GM10248 (cell line): ENCODE measurements at regions of chr2 and their contacts with region 1.

Region 1: DNA sequence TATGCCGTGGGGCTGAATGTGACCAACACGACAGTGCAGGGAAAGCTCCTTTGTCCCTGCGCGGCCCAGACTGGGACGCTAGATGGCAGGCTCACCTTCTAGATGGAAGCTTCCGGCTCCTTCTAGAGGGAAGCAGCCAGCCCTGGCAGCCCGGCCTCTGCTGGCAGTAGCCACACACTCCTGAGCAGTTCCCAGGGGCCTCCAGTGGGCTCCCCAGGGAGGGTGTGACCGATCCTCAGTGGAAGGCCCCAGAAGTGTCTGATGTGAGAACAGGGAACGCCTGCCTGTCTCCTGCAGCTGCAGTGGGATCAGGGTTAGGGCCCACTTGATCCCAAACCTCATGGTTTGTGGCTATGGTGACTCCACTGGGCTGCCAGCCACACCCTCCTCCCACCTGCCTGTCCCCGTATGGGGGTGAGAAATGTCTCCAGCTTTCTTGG is 48.5 kb upstream of the LRPPRC start:
- DNase-seq: peak; percentile 87
- CTCF ChIP-seq: peak; percentile 97

Region 2: GRCh38 chr2:44033947-44034346 is 10.4 kb before region 1 on chr2:
- CTCF ChIA-PET with region 1: interaction called, 27 read pairs
- POLR2A ChIA-PET with region 1: no interaction called
- DNase-seq: no peak
- CTCF ChIP-seq: no peak

Region 3: DNA sequence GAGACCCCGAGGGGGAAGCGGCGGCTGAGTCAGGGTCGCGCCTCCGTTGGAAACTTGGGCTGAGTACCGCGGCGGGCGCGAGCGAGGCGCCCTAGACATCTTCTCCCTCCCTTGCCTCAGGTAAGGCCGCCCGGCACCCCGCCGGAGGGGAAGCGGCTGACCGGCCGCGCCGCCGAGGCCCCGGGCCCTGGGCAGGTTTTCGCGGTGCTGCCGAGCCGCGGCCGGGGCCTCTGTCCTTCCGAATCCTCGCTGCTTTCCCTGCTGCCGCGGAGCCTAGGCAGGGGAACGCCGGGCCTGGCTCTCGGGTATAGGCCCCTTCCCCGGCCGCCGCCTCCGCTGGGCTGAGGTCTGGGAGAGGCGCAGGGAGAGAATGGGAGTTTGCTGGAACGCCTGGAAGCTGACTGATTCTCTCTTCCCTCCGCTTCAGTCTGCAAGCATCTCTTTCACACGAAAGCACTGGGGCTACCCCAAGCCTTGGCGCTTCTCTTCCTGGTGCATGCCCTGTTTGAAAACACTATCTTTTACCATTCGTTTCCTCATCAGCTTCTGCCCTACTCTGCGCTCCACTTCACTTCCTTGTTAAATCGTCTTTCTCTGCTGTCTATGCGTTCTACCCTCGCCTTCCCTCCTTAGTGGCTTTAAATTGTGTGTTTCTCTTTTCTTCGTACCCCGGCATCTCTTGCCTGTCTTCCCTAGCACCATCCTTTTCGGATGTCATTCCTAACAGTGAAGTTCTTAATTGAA is 125.0 kb after region 1 on chr2:
- CTCF ChIA-PET with region 1: no interaction called
- POLR2A ChIA-PET with region 1: no interaction called
- DNase-seq: peak; percentile 34
- CTCF ChIP-seq: no peak